ENCODE measurements at regions of chr6 and their contacts with region 1.

Region 1: GRCh38 chr6:137589067-137589848 is 95.1 kb upstream of the OLIG3 start:
- DNase-seq: peak; percentile 63
- ATAC-seq: peak; percentile 99
- H3K4me3 Mint-ChIP-seq: no peak overlapping the region
- H3K27ac Mint-ChIP-seq: no peak overlapping the region
- H3K4me1 Mint-ChIP-seq: peaks cover 23% of the 10 kb centered on the region
- H3K27me3 Mint-ChIP-seq: no peaks in the 10 kb centered on the region; the same call in 1 of the 2 replicates
- CTCF ChIP-seq: peak; percentile 82

Region 2: GRCh38 chr6:137415127-137415833 is 174.0 kb before region 1 on chr6:
- CTCF ChIA-PET with region 1: interaction called, 14 read pairs
- POLR2A ChIA-PET with region 1: no interaction called
- DNase-seq: peak; percentile 60
- ATAC-seq: peak; percentile 91
- H3K4me3 Mint-ChIP-seq: peak overlapping the region; percentile 66
- H3K27ac Mint-ChIP-seq: peak overlapping the region; percentile 73
- H3K4me1 Mint-ChIP-seq: peaks cover 52% of the 10 kb centered on the region
- H3K27me3 Mint-ChIP-seq: peaks cover 3% of the 10 kb centered on the region
- CTCF ChIP-seq: no peak

Region 3: GRCh38 chr6:137480431-137480830 is 108.8 kb before region 1 on chr6:
- CTCF ChIA-PET with region 1: interaction called, 16 read pairs
- POLR2A ChIA-PET with region 1: no interaction called
- DNase-seq: no peak
- ATAC-seq: no peak
- H3K4me3 Mint-ChIP-seq: no peak overlapping the region
- H3K27ac Mint-ChIP-seq: no peak overlapping the region
- H3K4me1 Mint-ChIP-seq: peaks cover 4% of the 10 kb centered on the region
- H3K27me3 Mint-ChIP-seq: peaks cover 20% of the 10 kb centered on the region
- CTCF ChIP-seq: no peak

Region 4: GRCh38 chr6:137497721-137498463 is 91.4 kb before region 1 on chr6:
- CTCF ChIA-PET with region 1: interaction called, 41 read pairs
- POLR2A ChIA-PET with region 1: no interaction called
- DNase-seq: peak; percentile 67
- ATAC-seq: peak; percentile 32
- H3K4me3 Mint-ChIP-seq: peak overlapping the region; percentile 80
- H3K27ac Mint-ChIP-seq: no peak overlapping the region
- H3K4me1 Mint-ChIP-seq: peaks cover 39% of the 10 kb centered on the region
- H3K27me3 Mint-ChIP-seq: peaks cover 93% of the 10 kb centered on the region
- CTCF ChIP-seq: no peak

Region 5: DNA sequence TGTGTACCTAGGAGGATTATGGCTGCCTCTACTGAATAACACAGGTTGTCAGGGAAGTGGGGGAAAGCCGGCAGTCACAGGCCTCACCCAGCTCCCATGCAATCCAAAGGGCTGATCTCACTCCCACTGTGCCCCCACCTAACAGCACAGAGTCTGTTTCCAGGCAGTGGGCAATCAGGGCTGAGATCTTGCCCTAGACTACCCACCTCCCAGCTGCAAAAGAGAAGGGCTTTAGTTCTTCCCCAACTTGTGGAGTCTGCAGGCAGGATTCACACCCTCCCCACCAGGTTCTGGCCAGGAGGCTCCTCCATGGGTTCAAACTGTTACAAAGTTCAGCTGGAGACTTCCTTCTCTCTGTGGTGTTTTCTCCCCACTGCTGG is 29.1 kb before region 1 on chr6:
- CTCF ChIA-PET with region 1: interaction called, 17 read pairs
- POLR2A ChIA-PET with region 1: no interaction called
- DNase-seq: no peak
- ATAC-seq: no peak
- H3K4me3 Mint-ChIP-seq: no peak overlapping the region
- H3K27ac Mint-ChIP-seq: no peak overlapping the region
- H3K4me1 Mint-ChIP-seq: peaks cover 6% of the 10 kb centered on the region; the same call in 1 of the 2 replicates
- H3K27me3 Mint-ChIP-seq: no peaks in the 10 kb centered on the region
- CTCF ChIP-seq: no peak

Region 6: GRCh38 chr6:137602313-137603270 is 13.3 kb after region 1 on chr6:
- CTCF ChIA-PET with region 1: interaction called, 11 read pairs
- POLR2A ChIA-PET with region 1: no interaction called
- DNase-seq: no peak
- ATAC-seq: no peak
- H3K4me3 Mint-ChIP-seq: no peak overlapping the region
- H3K27ac Mint-ChIP-seq: no peak overlapping the region
- H3K4me1 Mint-ChIP-seq: peaks cover 9% of the 10 kb centered on the region
- H3K27me3 Mint-ChIP-seq: no peaks in the 10 kb centered on the region
- CTCF ChIP-seq: no peak

Region 7: DNA sequence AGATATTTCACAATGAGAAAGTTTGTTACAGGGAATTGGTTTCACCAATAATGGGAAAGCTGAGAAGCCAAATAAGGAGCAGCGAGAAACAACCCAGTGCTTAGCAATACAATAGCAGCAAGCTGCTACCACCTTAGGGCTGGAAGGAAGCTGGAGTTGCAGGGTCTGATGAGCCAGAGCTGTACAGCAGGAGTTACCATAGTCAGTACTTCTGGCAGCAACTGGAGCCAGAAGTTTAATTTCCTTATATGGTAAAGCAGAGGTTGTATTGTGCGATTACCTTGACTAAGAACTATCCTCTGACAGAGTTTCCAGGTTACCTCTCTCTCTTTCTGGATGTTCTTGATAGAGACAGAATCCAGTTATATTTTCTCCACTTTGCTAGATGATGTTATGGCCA is 42.1 kb after region 1 on chr6:
- CTCF ChIA-PET with region 1: interaction called, 15 read pairs
- POLR2A ChIA-PET with region 1: no interaction called
- DNase-seq: no peak
- ATAC-seq: peak; percentile 97
- H3K4me3 Mint-ChIP-seq: no peak overlapping the region
- H3K27ac Mint-ChIP-seq: peak overlapping the region; percentile 11; the same call in 1 of the 2 replicates
- H3K4me1 Mint-ChIP-seq: peaks cover 16% of the 10 kb centered on the region
- H3K27me3 Mint-ChIP-seq: no peaks in the 10 kb centered on the region
- CTCF ChIP-seq: no peak

Region 8: DNA sequence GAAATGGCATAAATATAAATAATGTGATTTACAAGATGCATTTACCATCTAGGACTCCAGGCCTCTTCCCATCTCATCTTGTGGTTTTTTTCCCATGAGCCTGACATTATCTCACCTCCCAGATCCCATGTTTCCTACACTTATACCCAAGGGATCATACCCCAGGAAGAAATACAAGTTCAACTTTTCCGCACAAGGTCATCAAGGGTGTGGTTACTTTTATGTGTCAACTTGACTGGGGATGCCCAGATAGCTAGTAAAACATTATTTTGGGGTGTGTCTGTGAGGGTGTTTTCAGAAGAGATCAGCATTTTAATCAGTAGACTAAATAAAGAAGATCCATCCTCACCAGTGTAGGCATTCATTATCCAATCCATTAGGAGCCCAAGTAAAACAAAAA is 101.5 kb after region 1 on chr6:
- CTCF ChIA-PET with region 1: no interaction called
- POLR2A ChIA-PET with region 1: no interaction called
- DNase-seq: no peak
- ATAC-seq: no peak
- H3K4me3 Mint-ChIP-seq: no peak overlapping the region
- H3K27ac Mint-ChIP-seq: no peak overlapping the region
- H3K4me1 Mint-ChIP-seq: peaks cover 7% of the 10 kb centered on the region
- H3K27me3 Mint-ChIP-seq: no peaks in the 10 kb centered on the region
- CTCF ChIP-seq: no peak

Measured in WTC11 (cell line).